CD14-positive monocyte (primary cell): ENCODE measurements at regions of chr14 and their contacts with region 1.

Region 1: DNA sequence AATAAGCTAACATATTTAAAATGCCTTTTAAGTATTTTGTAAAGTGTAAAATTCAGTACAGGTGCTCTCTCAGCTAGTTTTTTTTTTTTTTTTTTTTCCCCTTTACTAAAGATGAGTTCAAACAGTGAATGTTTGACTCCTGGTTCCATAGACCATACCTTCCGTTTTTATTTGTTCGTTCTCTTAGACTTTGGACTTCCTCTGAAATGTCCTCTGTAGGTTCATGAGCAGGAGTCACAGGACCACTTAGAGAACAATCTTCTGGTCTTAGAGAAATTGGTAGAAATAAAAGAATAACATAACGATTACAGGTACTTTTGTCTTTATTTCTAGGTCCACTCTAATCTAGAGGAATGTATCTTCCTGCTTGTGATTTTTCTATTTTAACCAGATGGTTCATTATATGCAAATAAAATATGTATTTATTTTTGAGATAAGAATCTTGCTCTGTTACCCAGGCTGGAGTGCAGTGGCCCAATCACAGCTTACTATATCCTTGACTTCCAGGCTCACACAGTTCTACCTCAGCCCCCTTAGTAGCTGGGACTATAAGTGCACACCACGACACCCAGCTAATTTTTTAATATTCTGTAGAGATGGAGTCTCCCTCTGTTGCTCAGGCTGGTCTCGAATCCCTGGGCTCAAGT is 25.8 kb downstream of the STYX start:
- DNase-seq: no peak
- H3K4me3 ChIP-seq: no peak overlapping the region
- H3K4me3 Mint-ChIP-seq: no peak overlapping the region
- H3K27ac ChIP-seq: no peak overlapping the region
- H3K27ac Mint-ChIP-seq: peak overlapping the region in 1 of 7 donors; percentile 50
- H3K4me1 ChIP-seq: no peaks in the 10 kb centered on the region
- H3K4me1 Mint-ChIP-seq: no peaks in the 10 kb centered on the region
- H3K27me3 ChIP-seq: no peaks in the 10 kb centered on the region
- H3K27me3 Mint-ChIP-seq: peaks cover 0 to 3% (median 0%) of the 10 kb centered on the region in 3 donors
- CTCF ChIP-seq: no peak

Region 2: GRCh38 chr14:52695481-52696091 is 60.1 kb before region 1 on chr14 and contains the start of gene ERO1A:
- intact Hi-C with region 1: no loop called
- DNase-seq: peak; percentile 76 to 82 (median 76)
- H3K4me3 ChIP-seq: peak within 1 kb of the TSS; percentile 64 to 96 (median 91)
- H3K4me3 Mint-ChIP-seq: peak within 1 kb of the TSS; percentile 94 to 96
- H3K27ac ChIP-seq: peak within 1 kb of the TSS; percentile 80 to 97
- H3K27ac Mint-ChIP-seq: peak within 1 kb of the TSS; percentile 93 to 98 (median 94)
- H3K4me1 ChIP-seq: peaks cover 49 to 62% of the 10 kb centered on the region in 2 donors
- H3K4me1 Mint-ChIP-seq: peaks cover 62% of the 10 kb centered on the region
- H3K27me3 ChIP-seq: no peaks in the 10 kb centered on the region
- H3K27me3 Mint-ChIP-seq: peaks cover 0 to 1% (median 1%) of the 10 kb centered on the region in 3 donors
- CTCF ChIP-seq: no peak
- polyA plus RNA-seq, gene ERO1A: 22.1 to 39.5 (median 29.2) TPM

Region 3: GRCh38 chr14:52729925-52730667 is 25.6 kb before region 1 on chr14 and contains the start of gene STYX:
- intact Hi-C with region 1: no loop called
- DNase-seq: peak; percentile 93 to 97 (median 94)
- H3K4me3 ChIP-seq: peak within 1 kb of the TSS; percentile 78 to 98 (median 94)
- H3K4me3 Mint-ChIP-seq: peak within 1 kb of the TSS; percentile 94 to 95
- H3K27ac ChIP-seq: peak within 1 kb of the TSS; percentile 71 to 87
- H3K27ac Mint-ChIP-seq: peak within 1 kb of the TSS; percentile 89 to 96 (median 91)
- H3K4me1 ChIP-seq: peaks cover 19 to 22% of the 10 kb centered on the region in 2 donors
- H3K4me1 Mint-ChIP-seq: peaks cover 23% of the 10 kb centered on the region
- H3K27me3 ChIP-seq: no peaks in the 10 kb centered on the region
- H3K27me3 Mint-ChIP-seq: no peaks in the 10 kb centered on the region
- CTCF ChIP-seq: no peak
- polyA plus RNA-seq, gene STYX: 7.3 to 16.7 (median 12.0) TPM

Region 4: DNA sequence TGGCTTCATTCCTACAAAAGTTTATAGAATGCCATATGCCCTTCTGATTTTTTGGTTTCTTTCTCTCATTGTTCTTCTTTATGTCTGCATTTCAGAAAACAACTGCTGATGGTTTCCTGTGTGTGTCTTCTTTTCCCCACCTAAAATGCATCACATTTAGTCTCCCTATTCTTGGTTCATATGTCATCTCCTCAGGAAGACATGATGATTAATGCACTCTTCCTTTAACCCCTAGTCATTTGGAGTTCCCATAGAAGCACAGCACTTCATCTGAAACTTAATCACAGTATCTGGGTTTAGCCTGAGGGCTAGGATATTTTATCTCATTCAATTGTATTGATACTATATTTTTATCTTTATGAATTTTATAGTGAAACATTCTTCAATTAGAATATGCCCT is 14.2 kb after region 1 on chr14:
- intact Hi-C with region 1: loop called in 1 of 2 experiments (anchors 2 kb)
- DNase-seq: no peak
- H3K4me3 ChIP-seq: no peak overlapping the region
- H3K4me3 Mint-ChIP-seq: no peak overlapping the region
- H3K27ac ChIP-seq: no peak overlapping the region
- H3K27ac Mint-ChIP-seq: peak overlapping the region in 1 of 7 donors; percentile 6
- H3K4me1 ChIP-seq: no peaks in the 10 kb centered on the region
- H3K4me1 Mint-ChIP-seq: no peaks in the 10 kb centered on the region
- H3K27me3 ChIP-seq: no peaks in the 10 kb centered on the region
- H3K27me3 Mint-ChIP-seq: no peaks in the 10 kb centered on the region
- CTCF ChIP-seq: no peak